ENCODE measurements at regions of chrX and their contacts with region 1.

Region 1: GRCh38 chrX:19739683-19740082 is 147.7 kb downstream of the SH3KBP1 start:
- DNase-seq: peak; percentile 39 to 47 (median 42)
- H3K4me3 ChIP-seq: no peak overlapping the region
- H3K4me3 Mint-ChIP-seq: peak overlapping the region in 4 of 8 donors; percentile 39 to 85 (median 62)
- H3K27ac ChIP-seq: peak overlapping the region; percentile 21
- H3K27ac Mint-ChIP-seq: peak overlapping the region; percentile 71 to 98 (median 86)
- H3K4me1 ChIP-seq: peaks cover 90% of the 10 kb centered on the region
- H3K4me1 Mint-ChIP-seq: peaks cover 47 to 84% (median 68%) of the 10 kb centered on the region in 4 donors
- H3K27me3 ChIP-seq: no peaks in the 10 kb centered on the region
- H3K27me3 Mint-ChIP-seq: no peaks in the 10 kb centered on the region

Region 2: DNA sequence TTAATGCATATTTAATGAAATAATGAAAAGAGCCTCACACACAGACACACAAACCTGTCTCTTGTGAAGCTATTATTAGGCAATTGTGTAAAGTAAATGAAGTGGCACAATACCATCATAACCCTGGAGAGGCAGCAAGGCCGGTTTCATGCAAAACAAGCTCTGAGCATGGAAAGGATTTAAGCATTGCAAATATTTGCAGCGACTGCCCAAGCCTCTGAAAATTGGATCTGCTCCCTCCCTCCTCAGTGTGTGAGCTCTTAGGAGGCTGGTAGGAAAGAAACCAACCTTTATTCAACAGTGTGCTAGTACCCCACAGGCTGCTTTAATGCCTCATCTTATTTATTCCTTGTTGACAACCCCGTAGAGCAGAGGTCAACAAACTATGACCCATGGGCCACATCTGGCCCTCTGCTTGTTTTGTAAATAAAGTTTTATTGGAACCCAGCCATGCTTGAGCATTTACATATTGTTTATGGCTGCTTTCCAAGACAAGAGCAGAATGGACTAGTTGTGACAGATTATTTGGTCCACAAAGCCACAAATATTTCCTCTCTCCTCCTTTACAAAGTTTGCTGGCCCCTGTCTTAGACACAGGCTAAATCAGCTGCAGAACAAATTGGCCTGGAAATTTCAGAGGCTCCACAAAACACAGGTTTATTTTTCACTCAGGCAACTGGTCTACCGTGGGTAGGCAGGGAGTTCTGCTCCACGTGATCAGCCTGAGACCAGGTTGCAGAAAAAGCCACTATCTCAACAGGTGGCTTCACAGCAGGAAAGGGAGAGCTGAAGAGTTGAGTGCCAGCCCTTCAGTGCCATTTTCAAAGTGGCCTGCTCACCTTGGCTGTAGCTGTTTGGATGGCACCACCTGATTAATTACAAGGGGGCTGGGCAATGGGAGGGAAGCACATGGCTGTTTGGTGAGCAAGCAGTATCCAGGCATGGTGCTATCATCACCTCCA is 1084.5 kb before region 1 on chrX:
- CTCF ChIA-PET with region 1: no interaction called
- POLR2A ChIA-PET with region 1: no interaction called
- intact Hi-C with region 1: no loop called
- DNase-seq: no peak
- H3K4me3 ChIP-seq: no peak overlapping the region
- H3K4me3 Mint-ChIP-seq: no peak overlapping the region
- H3K27ac ChIP-seq: no peak overlapping the region
- H3K27ac Mint-ChIP-seq: no peak overlapping the region
- H3K4me1 ChIP-seq: no peaks in the 10 kb centered on the region
- H3K4me1 Mint-ChIP-seq: no peaks in the 10 kb centered on the region
- H3K27me3 ChIP-seq: no peaks in the 10 kb centered on the region
- H3K27me3 Mint-ChIP-seq: no peaks in the 10 kb centered on the region

Region 3: GRCh38 chrX:19593690-19594089 is 146.0 kb before region 1 on chrX:
- CTCF ChIA-PET with region 1: no interaction called
- POLR2A ChIA-PET with region 1: no interaction called
- intact Hi-C with region 1: loop called (anchors 10 kb)
- DNase-seq: peak in 4 of 5 donors; percentile 22 to 36 (median 34)
- H3K4me3 ChIP-seq: no peak overlapping the region
- H3K4me3 Mint-ChIP-seq: no peak overlapping the region
- H3K27ac ChIP-seq: no peak overlapping the region
- H3K27ac Mint-ChIP-seq: peak overlapping the region in 5 of 7 donors; percentile 3 to 39 (median 31)
- H3K4me1 ChIP-seq: no peaks in the 10 kb centered on the region
- H3K4me1 Mint-ChIP-seq: peaks cover 6 to 20% (median 17%) of the 10 kb centered on the region in 4 donors
- H3K27me3 ChIP-seq: no peaks in the 10 kb centered on the region
- H3K27me3 Mint-ChIP-seq: no peaks in the 10 kb centered on the region

Region 4: DNA sequence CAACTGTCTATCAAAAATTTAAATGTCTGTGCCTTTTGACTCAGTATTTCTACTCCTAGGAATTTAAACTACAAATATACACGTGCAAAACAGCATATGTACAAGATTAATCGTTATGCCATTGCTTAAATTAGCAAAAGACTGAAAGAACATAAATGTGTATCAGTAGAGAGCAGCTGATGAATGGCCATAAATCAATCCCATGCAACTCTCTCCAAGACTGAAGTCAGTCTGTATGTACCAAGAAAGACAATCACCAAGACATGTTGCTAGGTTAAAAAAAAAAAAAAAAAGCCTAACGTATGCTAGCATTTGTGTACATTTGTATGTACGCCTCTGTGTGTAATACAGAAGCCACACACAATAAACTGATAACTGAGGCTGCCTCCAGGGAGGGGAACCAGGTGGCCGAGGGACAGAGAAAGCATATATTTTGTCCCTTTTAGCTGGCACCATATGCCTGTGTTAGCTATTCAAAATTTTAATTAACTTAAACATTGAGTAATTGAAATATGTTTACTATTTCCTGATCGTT is 17.0 kb after region 1 on chrX:
- CTCF ChIA-PET with region 1: interaction called, 10 read pairs
- POLR2A ChIA-PET with region 1: interaction called, 4 read pairs
- intact Hi-C with region 1: no loop called
- DNase-seq: no peak
- H3K4me3 ChIP-seq: no peak overlapping the region
- H3K4me3 Mint-ChIP-seq: no peak overlapping the region
- H3K27ac ChIP-seq: no peak overlapping the region
- H3K27ac Mint-ChIP-seq: peak overlapping the region in 3 of 7 donors; percentile 46 to 84 (median 47)
- H3K4me1 ChIP-seq: peaks cover 84% of the 10 kb centered on the region
- H3K4me1 Mint-ChIP-seq: peaks cover 61 to 89% (median 75%) of the 10 kb centered on the region in 4 donors
- H3K27me3 ChIP-seq: no peaks in the 10 kb centered on the region
- H3K27me3 Mint-ChIP-seq: no peaks in the 10 kb centered on the region

Region 5: DNA sequence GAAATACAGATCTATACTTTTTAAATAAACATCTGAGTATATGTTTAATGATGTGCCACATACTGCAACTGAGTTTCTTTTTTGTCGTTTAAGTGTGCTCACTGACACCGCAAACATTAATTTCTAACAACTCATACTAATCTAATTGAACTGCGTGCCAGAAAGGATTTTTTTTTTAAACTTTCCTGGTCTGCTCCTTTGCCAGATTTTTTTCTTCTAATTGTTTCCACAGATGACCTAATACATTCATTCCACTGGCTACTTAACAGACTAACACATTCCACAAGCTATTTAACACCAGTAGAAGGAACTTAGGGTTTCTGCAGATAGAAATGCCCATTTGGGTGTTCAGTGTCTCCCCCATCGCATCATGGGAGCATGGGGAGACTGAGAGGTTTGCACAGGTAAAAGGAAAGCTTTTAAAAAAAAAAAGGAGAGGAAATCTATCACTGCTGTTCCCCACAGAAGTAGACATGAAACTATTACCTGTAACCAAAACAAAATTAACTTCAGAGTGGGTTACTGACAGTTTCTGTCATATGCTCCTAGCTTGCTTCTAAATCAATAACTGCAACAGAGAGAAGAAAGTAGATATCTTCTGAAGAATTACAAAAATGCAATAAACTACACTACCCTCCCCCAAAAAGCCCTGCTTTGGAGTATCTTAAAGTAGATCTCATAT is 116.2 kb after region 1 on chrX:
- CTCF ChIA-PET with region 1: interaction called, 10 read pairs
- POLR2A ChIA-PET with region 1: interaction called, 3 read pairs
- intact Hi-C with region 1: no loop called
- DNase-seq: no peak
- H3K4me3 ChIP-seq: no peak overlapping the region
- H3K4me3 Mint-ChIP-seq: peak overlapping the region in 6 of 8 donors; percentile 54 to 86 (median 70)
- H3K27ac ChIP-seq: no peak overlapping the region
- H3K27ac Mint-ChIP-seq: peak overlapping the region; percentile 65 to 90 (median 82)
- H3K4me1 ChIP-seq: peaks cover 20% of the 10 kb centered on the region
- H3K4me1 Mint-ChIP-seq: peaks cover 20 to 37% (median 24%) of the 10 kb centered on the region in 4 donors
- H3K27me3 ChIP-seq: no peaks in the 10 kb centered on the region
- H3K27me3 Mint-ChIP-seq: no peaks in the 10 kb centered on the region

Region 6: DNA sequence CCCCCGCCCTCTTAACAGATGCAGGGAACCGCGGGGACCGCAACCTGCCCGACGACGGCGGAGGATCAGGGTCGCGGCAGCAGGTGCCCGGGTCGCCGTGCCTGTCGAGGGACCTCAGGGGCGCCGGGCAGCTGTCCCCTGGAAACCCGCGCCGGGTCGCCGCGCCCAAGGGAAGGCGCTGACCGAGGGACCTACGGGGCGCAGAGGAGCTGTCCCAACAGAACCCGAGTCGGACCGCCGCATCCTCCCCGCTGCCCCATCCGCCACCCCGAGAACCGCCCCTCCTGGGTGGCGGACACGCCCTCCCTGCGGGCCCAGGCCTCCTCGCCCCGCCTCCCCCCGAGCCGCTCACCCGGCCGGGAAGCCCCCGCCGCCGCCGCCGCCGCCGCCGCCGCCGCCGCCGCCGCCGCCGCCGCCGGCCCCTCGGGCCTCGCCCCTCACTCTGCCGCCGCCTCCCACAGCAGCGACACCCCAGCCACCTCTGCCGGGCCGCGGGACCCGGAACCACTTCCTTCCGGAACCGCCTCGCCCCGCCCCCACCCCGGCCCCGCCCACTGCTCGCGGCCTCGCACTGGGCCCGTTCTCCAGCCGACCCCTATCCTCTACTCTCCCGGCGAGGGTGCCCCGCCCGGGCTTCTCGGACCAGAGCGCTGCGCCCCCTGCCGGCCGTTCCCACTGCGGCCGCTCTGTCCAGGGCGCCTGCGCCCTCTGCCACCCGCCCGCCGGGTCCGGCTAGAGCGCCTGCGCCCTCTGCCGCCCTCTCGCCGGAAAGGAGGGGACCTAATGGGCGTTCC is 251.1 kb after region 1 on chrX and contains the start of gene BCLAF3:
- CTCF ChIA-PET with region 1: no interaction called
- POLR2A ChIA-PET with region 1: no interaction called
- intact Hi-C with region 1: loop called (anchors 10 kb)
- DNase-seq: peak; percentile 80 to 82 (median 81)
- H3K4me3 ChIP-seq: peak within 1 kb of the TSS in 1 of 2 donors; percentile 62
- H3K4me3 Mint-ChIP-seq: peak within 1 kb of the TSS; percentile 83 to 95 (median 90)
- H3K27ac ChIP-seq: peak within 1 kb of the TSS; percentile 70
- H3K27ac Mint-ChIP-seq: peak within 1 kb of the TSS; percentile 68 to 97 (median 94)
- H3K4me1 ChIP-seq: peaks cover 10% of the 10 kb centered on the region
- H3K4me1 Mint-ChIP-seq: peaks cover 10 to 31% (median 20%) of the 10 kb centered on the region in 4 donors
- H3K27me3 ChIP-seq: no peaks in the 10 kb centered on the region
- H3K27me3 Mint-ChIP-seq: no peaks in the 10 kb centered on the region
- total RNA-seq, gene BCLAF3: 12.6 to 15.0 TPM

Measured in CD4-positive, alpha-beta memory T cell (primary cell).